MCF 10A (cell line): ENCODE measurements at regions of chr5 and their contacts with region 1.

Region 1: GRCh38 chr5:141992349-141992963 is 20.4 kb downstream of the GNPDA1 start:
- DNase-seq: peak; percentile 88
- H3K4me3 Mint-ChIP-seq: no peak overlapping the region
- H3K27ac Mint-ChIP-seq: no peak overlapping the region
- H3K4me1 Mint-ChIP-seq: no peaks in the 10 kb centered on the region
- H3K27me3 Mint-ChIP-seq: no peaks in the 10 kb centered on the region
- CTCF ChIP-seq: peak; percentile 82

Region 2: DNA sequence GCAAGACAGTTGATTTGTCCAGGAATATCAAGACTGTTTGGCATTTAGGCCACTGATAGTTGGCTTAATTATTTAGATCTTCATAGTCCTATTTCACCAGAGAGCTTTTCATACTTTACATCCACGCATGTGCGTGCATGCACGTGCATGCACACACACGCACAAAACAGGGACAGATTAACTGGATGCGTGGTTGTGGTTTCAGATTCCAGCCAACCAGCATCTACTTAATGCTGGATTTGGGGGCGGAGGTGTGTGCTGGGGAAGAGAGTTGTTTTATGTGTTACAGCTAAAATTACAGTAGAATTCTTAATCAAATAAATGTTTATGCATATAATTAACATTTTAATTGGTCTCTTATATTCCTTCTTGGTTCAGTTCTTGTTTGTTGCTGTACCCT is 16.3 kb before region 1 on chr5:
- CTCF ChIA-PET with region 1: interaction called, 71 read pairs
- POLR2A ChIA-PET with region 1: no interaction called
- intact Hi-C with region 1: no loop called
- DNase-seq: no peak
- H3K4me3 Mint-ChIP-seq: no peak overlapping the region
- H3K27ac Mint-ChIP-seq: peak overlapping the region; percentile 6
- H3K4me1 Mint-ChIP-seq: peaks cover 13% of the 10 kb centered on the region
- H3K27me3 Mint-ChIP-seq: no peaks in the 10 kb centered on the region
- CTCF ChIP-seq: no peak

Region 3: DNA sequence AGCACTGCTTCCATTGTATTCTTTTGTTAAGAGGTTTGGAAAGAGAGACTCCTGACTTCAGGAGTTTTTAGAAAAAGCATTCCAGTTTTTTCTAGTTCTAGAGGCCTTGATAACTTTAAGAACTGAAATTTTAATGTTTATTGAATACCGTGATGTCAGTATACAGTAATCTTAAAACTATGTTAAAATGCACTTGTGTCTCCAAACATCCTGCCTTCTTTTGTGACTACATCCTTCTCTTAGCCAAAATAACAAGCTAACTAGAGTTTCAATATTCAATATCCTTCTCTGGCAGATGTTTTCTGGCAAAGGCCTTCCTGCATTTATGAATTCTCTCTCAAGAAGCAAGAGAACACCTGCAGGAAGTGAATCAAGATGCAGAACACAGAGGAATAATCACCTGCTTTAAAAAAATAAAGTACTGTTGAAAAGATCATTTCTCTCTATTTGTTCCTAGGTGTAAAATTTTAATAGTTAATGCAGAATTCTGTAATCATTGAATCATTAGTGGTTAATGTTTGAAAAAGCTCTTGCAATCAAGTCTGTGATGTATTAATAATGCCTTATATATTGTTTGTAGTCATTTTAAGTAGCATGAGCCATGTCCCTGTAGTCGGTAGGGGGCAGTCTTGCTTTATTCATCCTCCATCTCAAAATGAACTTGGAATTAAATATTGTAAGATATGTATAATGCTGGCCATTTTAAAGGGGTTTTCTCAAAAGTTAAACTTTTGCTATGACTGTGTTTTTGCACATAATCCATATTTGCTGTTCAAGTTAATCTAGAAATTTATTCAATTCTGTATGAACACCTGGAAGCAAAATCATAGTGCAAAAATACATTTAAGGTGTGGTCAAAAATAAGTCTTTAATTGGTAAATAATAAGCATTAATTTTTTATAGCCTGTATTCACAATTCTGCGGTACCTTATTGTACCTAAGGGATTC is 159.3 kb after region 1 on chr5:
- CTCF ChIA-PET with region 1: interaction called, 172 read pairs
- POLR2A ChIA-PET with region 1: interaction called, 3 read pairs
- intact Hi-C with region 1: no loop called
- DNase-seq: peak; percentile 85
- H3K4me3 Mint-ChIP-seq: no peak overlapping the region
- H3K27ac Mint-ChIP-seq: no peak overlapping the region
- H3K4me1 Mint-ChIP-seq: no peaks in the 10 kb centered on the region
- H3K27me3 Mint-ChIP-seq: no peaks in the 10 kb centered on the region
- CTCF ChIP-seq: peak; percentile 89

Region 4: GRCh38 chr5:142453932-142454331 is 461.5 kb after region 1 on chr5:
- CTCF ChIA-PET with region 1: no interaction called
- POLR2A ChIA-PET with region 1: no interaction called
- intact Hi-C with region 1: no loop called
- DNase-seq: no peak
- H3K4me3 Mint-ChIP-seq: no peak overlapping the region
- H3K27ac Mint-ChIP-seq: no peak overlapping the region
- H3K4me1 Mint-ChIP-seq: no peaks in the 10 kb centered on the region
- H3K27me3 Mint-ChIP-seq: no peaks in the 10 kb centered on the region
- CTCF ChIP-seq: no peak

Region 5: GRCh38 chr5:142627383-142628255 is 635.2 kb after region 1 on chr5:
- CTCF ChIA-PET with region 1: no interaction called
- POLR2A ChIA-PET with region 1: no interaction called
- intact Hi-C with region 1: no loop called
- DNase-seq: peak; percentile 42
- H3K4me3 Mint-ChIP-seq: no peak overlapping the region
- H3K27ac Mint-ChIP-seq: no peak overlapping the region
- H3K4me1 Mint-ChIP-seq: no peaks in the 10 kb centered on the region
- H3K27me3 Mint-ChIP-seq: no peaks in the 10 kb centered on the region
- CTCF ChIP-seq: no peak